IMR-90 (cell line): ENCODE measurements at regions of chr17 and their contacts with region 1.

Region 1: DNA sequence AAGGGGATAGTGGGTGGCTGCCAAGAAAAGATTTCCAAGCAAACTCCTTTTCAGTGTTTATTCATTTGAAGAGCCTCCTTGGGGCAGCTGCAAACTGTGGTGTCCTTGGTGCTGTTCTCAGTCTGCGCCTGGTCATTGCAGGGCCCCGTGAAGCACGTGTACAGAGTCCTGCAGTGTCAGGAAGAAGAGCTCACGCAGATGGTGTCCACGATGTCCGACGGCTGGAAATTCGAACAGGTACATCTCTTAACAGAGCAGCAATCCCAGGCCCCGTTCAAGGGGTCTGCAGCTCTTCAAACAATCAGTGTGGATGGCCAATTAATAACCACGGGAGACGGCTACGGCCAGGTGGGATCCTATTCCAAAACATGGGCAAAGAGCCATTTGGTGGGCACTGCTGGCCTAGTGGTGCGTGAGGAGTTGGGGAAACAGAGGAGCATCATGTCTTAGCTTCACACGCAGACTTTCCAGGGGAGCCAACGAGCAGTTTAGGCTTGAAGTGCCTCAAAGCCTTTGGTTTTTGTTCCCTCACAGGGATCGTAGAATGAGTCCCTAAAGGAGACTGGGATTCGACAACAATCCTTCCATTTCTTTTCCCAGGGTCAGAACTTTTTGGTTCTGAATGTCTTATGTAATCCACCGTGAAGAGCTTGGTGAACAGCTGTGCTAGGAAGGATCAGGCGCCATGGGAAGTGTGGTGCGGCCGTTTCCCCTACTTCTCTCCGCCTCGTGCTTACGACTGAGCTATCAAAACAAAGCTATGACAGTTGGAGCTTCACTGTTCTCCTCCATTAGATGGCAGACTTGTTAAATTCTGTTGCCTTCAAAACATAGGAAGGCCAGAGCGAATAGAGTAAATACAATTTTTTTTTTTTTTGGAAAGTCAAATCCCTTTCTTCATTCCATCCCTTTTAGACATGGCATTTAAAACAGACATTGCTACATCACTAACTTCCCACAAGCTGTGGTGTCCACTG is 12.6 kb downstream of the KCTD2 start:
- DNase-seq: peak; percentile 81
- ATAC-seq: peak; percentile 98
- H3K4me3 ChIP-seq: no peak overlapping the region
- H3K27ac ChIP-seq: no peak overlapping the region
- H3K4me1 ChIP-seq: peaks cover 6% of the 10 kb centered on the region; the same call in 1 of the 2 replicates
- H3K27me3 ChIP-seq: no peaks in the 10 kb centered on the region
- CTCF ChIP-seq: peak; percentile 77
- POLR2A ChIP-seq: no peak
- RAD21 ChIP-seq: peak; percentile 69

Region 2: GRCh38 chr17:75205037-75205792 is 145.6 kb after region 1 on chr17 and contains the start of gene NUP85:
- CTCF ChIA-PET with region 1: interaction called, 6 read pairs
- POLR2A ChIA-PET with region 1: no interaction called
- dilution Hi-C with region 1: no loop called
- in situ Hi-C with region 1: loop called (anchors 10 kb)
- intact Hi-C with region 1: loop called (anchors 10 kb)
- DNase-seq: peak; percentile 89
- ATAC-seq: peak; percentile 98
- H3K4me3 ChIP-seq: peak within 1 kb of the TSS; percentile 91
- H3K27ac ChIP-seq: peak within 1 kb of the TSS; percentile 98
- H3K4me1 ChIP-seq: no peaks in the 10 kb centered on the region; the same call in 1 of the 2 replicates
- H3K27me3 ChIP-seq: no peaks in the 10 kb centered on the region
- CTCF ChIP-seq: no peak
- POLR2A ChIP-seq: peak; percentile 77
- RAD21 ChIP-seq: no peak
- total RNA-seq, gene NUP85: 26.7 and 29.4 TPM in 2 replicates

Region 3: DNA sequence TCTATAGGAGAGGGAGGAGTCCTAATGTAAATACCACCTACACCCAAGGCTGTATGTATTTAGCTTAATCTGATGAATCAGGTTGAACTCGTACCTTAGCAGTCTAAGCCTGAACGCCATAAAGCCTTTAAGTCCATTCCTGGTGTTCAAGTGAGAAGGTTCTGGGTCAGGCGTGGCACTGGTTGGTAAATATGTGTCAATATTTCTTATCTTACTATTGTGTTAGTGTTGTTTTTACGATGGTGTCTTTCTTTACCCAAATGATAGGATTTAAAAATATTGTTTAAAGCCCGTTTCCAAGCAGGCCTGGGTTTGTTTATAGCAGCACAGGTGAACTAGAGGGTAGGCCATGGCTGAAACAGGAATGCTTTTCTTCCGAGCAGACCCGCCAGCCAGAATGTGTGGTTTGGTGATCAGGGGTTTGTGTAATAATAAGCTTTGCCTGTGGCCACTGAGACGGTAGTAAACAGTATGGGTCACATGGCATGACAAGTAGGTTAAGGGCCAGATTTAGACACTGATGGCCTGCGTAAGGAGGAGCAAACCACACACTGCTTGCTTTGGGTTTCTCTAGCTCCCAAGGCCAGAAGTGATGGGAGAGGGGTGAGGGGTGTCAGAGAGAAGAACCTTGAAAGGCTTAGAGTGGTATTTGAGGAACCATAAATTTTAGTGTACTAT is 400.1 kb after region 1 on chr17:
- CTCF ChIA-PET with region 1: no interaction called
- POLR2A ChIA-PET with region 1: no interaction called
- dilution Hi-C with region 1: no loop called
- in situ Hi-C with region 1: no loop called
- intact Hi-C with region 1: no loop called
- DNase-seq: no peak
- ATAC-seq: no peak
- H3K4me3 ChIP-seq: no peak overlapping the region
- H3K27ac ChIP-seq: no peak overlapping the region
- H3K4me1 ChIP-seq: peaks cover 3% of the 10 kb centered on the region
- H3K27me3 ChIP-seq: no peaks in the 10 kb centered on the region
- CTCF ChIP-seq: no peak
- POLR2A ChIP-seq: no peak
- RAD21 ChIP-seq: no peak